GM13977 (cell line): ENCODE measurements at regions of chr1 and their contacts with region 1.

Region 1: DNA sequence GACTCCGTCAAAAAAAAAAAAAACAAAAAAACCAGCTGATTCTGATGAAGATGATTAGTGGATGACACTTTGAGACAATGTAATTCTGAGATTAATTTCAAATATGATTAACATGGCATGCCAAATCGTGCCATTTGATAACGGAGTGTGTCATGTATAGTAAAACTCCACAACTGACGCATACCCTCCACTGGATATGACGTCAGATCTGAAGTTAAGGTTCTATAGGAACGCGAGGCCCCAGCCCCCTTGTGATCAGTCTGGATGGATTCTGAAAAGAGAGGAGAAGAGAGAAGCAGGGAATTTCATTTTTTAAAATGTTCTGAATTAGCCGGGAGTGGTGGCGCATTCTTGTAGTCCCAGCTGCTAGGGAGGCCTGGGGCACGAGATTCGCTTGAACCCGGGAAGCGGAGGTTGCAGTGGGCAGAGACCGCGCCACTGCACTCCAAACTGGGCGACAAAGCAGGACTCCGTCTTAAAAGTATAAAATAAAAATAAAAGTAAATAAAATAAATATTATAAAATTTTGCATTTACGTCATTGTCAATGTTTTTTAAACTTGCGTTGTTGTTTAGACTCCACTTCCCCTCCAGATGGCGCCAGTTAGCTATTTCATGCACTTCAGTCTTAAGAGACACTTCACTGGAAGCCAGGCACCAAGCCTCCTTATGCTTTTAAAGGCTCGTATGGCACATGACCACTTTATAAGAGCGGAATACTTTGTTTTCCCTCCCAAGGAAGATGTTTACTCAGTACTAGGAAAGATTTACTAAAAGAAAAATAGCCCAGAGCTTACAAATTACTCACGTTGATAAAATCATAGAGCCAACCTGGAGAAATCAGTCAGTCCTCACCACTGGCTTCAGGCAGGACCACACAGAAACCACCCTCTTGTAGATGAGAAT is 65.5 kb downstream of the UBE2U start:
- DNase-seq: peak; percentile 59
- CTCF ChIP-seq: peak; percentile 78

Region 2: DNA sequence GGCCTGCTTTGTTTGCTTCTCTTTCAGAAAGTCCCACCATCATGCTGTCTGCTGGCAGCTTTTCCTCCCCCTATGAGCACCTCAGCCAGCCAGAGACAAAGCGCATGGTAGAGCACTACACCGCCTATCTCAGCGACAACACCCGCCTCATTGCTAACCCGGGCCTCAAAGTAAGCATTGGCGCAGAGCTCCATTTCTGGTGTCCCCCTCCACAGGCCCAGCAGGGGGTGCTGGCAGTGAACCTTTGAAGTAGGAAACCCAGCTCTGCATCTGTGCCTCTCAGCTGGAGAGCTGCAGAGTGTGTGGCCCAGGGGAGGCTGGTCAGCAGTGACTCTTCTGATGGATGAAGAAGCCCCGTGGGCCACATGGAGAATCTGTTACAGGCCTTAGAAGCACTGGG is 394.8 kb after region 1 on chr1:
- in situ Hi-C with region 1: loop called (anchors 25 kb)
- DNase-seq: peak; percentile 7
- CTCF ChIP-seq: peak; percentile 31

Region 3: DNA sequence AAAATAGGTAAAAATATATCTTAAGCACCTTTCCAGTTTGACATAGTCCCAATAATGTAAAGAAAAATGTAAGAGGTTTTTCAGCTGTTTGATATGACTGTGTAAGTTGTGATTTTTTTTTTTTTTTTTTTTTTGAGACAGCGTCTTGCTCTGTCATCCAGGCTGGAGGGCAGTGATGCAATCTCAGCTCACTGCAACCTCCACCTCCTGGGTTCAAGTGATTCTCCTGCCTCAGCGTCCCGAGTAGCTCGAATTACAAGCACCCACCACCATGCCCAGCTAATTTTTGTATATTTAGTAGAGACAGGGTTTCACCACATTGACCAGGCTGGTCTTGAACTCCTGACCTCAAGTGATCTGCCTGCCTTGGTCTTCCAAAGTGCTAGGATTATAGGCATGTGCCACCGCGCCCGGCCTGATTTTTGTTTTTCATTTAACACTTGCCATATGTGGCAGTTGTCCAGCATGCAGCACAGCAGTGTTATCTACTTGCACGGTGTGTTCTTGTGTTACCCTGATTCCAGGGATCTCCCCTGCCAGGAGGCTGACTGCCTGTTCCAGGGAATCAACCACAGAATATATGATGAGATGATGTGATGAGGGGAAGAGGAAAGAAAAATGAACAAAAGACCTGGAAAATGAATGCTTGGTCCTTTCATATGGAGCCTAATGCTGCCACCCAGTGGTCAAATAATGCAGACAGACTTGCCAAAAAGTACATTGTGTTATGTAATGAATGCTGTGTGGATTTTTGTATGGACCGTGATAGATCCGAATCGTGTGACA is 555.0 kb after region 1 on chr1:
- in situ Hi-C with region 1: loop called (anchors 25 kb)
- DNase-seq: peak; percentile 50
- CTCF ChIP-seq: peak; percentile 77